Adrenal gland (tissue), 19 donors: ENCODE measurements at regions of chr1 and their contacts with region 1.

Region 1: GRCh38 chr1:16351994-16352841 is at the start of gene FBXO42:
- DNase-seq: peak; percentile 87 to 94 (median 90)
- H3K4me3 ChIP-seq: peak within 1 kb of the TSS; percentile 43 to 99 (median 78)
- H3K27ac ChIP-seq: peak within 1 kb of the TSS; percentile 55 to 98 (median 93)
- H3K4me1 ChIP-seq: peaks cover 0 to 36% of the 10 kb centered on the region in 2 donors
- H3K27me3 ChIP-seq: no peaks in the 10 kb centered on the region
- CTCF ChIP-seq: peak in 4 of 6 experiments; percentile 32 to 59 (median 44)
- POLR2A ChIP-seq: peak; percentile 79 to 96
- total RNA-seq, gene FBXO42: 17.3 to 44.9 (median 20.2) TPM

Region 2: DNA sequence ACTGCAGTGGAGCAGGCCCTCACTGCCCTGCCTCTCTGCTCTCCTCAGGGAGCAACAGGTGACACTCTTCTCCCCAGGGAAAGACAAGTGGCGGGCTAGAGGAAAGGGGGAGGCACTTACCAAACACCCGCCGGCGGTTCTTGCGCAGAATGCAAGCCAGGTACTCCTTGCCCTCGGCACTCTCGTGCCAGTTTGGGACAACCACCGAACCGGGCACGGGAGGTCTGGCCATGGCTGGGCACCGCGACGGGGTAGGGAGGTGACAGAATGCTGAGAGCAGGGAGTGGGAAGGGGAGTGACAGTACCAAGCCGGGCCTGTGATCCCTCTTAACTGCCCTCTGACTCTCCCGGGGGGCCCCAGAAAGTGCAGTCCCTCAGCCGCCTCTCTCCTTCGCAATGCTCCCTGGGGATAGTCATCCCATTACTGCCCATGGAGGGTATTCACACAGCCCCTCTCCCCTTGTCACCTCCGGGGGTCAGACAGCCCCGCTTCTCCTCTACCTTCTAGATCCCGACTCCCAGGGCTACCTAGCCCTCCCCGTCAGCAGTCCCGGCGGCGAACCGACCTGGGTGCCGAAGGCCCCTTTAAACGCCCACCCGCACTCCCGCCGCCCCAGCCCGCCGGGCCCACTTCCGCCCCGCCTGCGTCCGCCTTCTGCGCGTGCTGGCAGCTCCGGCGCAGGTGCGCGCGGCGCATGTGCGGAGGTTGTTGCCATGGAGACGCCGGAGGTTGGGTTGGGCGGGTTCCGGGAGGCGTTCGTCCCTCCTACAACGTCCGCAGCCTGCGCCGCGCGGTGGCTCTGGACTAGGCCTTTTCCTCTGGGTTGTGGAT is 115.5 kb before region 1 on chr1 and contains the start of gene CPLANE2:
- intact Hi-C with region 1: no loop called
- DNase-seq: peak; percentile 94 to 98 (median 96)
- H3K4me3 ChIP-seq: peak within 1 kb of the TSS in 2 of 4 donors; percentile 28 to 61
- H3K27ac ChIP-seq: peak within 1 kb of the TSS; percentile 86 to 94 (median 94)
- H3K4me1 ChIP-seq: peaks cover 9 to 23% of the 10 kb centered on the region in 2 donors
- H3K27me3 ChIP-seq: no peaks in the 10 kb centered on the region
- CTCF ChIP-seq: no peak
- POLR2A ChIP-seq: peak; percentile 36 to 74
- total RNA-seq, gene CPLANE2: 6.3 to 21.3 (median 12.4) TPM

Region 3: DNA sequence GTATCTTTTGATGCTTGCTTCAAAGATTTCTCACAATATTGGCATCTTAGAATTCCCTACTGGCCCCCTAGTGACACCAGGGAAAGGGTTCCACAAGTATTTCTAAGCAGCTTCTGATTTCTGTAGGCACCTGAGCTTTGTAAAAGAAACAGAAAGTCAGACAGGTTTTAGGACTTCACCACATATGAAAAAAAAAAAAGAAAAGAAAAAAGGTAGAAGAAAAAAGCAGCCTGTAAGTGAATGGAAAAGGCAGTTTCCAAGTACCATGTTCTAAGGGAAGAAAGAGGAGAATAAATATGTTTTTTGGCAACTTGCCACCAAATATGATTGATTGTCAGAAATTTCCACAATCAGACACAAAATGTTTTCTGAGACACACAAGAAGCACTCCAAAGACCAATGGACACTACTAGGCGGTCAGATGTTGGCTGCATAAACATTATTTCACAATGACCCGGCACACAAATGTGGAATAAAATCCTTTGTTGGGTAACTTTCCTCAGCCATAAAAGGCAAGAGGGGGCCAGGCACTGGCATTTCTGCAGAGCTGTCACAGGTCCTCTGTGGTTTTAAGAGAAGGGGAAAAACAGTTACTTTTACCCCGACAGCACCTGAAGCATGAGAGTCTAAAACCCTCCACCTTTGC is 102.5 kb before region 1 on chr1:
- intact Hi-C with region 1: loop called in 1 of 2 experiments (anchors 10 kb)
- DNase-seq: peak; percentile 40 to 88 (median 73)
- H3K4me3 ChIP-seq: peak overlapping the region in 1 of 4 donors; percentile 18
- H3K27ac ChIP-seq: peak overlapping the region; percentile 57 to 85 (median 77)
- H3K4me1 ChIP-seq: peaks cover 40 to 49% of the 10 kb centered on the region in 2 donors
- H3K27me3 ChIP-seq: no peaks in the 10 kb centered on the region
- CTCF ChIP-seq: no peak
- POLR2A ChIP-seq: no peak

Region 4: GRCh38 chr1:16293538-16293937 is 58.7 kb before region 1 on chr1:
- intact Hi-C with region 1: loop called in 1 of 2 experiments (anchors 10 kb)
- DNase-seq: no peak
- H3K4me3 ChIP-seq: no peak overlapping the region
- H3K27ac ChIP-seq: peak overlapping the region in 2 of 5 donors; percentile 13 to 17
- H3K4me1 ChIP-seq: peaks cover 0 to 4% of the 10 kb centered on the region in 2 donors
- H3K27me3 ChIP-seq: no peaks in the 10 kb centered on the region
- CTCF ChIP-seq: no peak
- POLR2A ChIP-seq: no peak